Posterior vena cava (tissue), 2 donors: ENCODE measurements at regions of chr3 and their contacts with region 1.

Region 1: DNA sequence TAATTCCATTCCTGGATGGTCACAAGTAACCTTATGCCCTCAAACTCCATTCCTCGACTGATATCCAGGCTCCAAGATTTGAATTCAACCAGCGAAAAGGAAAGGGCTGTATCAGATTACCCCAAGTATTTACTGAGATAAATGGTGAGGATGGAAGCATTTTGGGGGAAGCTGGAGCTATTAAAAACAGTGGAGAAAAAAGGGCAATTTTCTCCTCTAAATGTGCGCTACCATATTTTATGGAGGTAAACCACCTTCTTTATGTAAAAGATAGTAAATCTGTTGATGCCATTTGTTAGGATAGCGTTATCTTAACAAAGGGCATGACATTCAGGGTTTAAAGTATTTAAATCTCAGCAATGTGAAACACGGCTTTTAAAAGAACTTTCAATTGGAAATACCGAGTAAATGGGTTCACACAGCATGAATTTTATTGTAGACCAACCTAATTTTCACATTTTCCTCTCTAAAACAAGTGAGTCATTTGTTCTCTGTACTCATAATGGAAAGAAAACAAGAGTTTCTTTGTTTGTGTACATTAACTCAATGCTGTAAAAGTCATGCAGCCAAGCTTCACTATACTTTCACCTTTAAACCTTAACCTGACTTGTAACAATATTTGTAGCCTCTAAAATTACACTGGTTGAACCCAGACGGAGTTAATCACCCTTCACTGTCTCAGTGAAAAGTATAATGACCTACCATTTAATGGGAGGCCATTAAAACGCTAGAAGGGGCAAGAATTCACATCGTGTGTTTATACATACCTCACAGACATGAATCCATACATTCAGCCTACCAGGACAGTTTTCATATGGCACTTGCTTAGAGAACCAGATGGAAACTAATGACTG is 773.4 kb downstream of the ROBO1 start:
- DNase-seq: no peak

Region 2: GRCh38 chr3:77377717-77378116 is 1616.7 kb before region 1 on chr3:
- intact Hi-C with region 1: loop called in 1 of 2 experiments (anchors 5 kb)
- DNase-seq: no peak

Region 3: GRCh38 chr3:78846718-78847117 is 147.7 kb before region 1 on chr3:
- intact Hi-C with region 1: no loop called
- DNase-seq: no peak